Activated B cell treated with CpG ODN at 0.5 μM for 24 hours (primary cell): ENCODE measurements at regions of chr5 and their contacts with region 1.

Region 1: GRCh38 chr5:181223058-181223728 is at the start of gene TRIM41:
- DNase-seq: peak; percentile 98
- ATAC-seq: peak; percentile 67
- H3K4me3 Mint-ChIP-seq: peak within 1 kb of the TSS; percentile 95
- H3K27ac Mint-ChIP-seq: peak within 1 kb of the TSS; percentile 98
- H3K4me1 Mint-ChIP-seq: peaks cover 51% of the 10 kb centered on the region
- H3K27me3 Mint-ChIP-seq: peaks cover 6% of the 10 kb centered on the region
- CTCF ChIP-seq: no peak
- total RNA-seq, gene TRIM41: 34.9 and 39.6 TPM in 2 replicates

Region 2: GRCh38 chr5:180802325-180803180 is 420.6 kb before region 1 on chr5 and contains the start of gene MGAT1:
- CTCF ChIA-PET with region 1: no interaction called
- POLR2A ChIA-PET with region 1: interaction called, 14 read pairs
- intact Hi-C with region 1: loop called (anchors 1 kb)
- DNase-seq: peak; percentile 84
- ATAC-seq: peak; percentile 60
- H3K4me3 Mint-ChIP-seq: peak within 1 kb of the TSS; percentile 91
- H3K27ac Mint-ChIP-seq: peak within 1 kb of the TSS; percentile 91
- H3K4me1 Mint-ChIP-seq: peaks cover 84% of the 10 kb centered on the region
- H3K27me3 Mint-ChIP-seq: no peaks in the 10 kb centered on the region
- CTCF ChIP-seq: no peak
- total RNA-seq, gene MGAT1: 66.9 and 74.5 TPM in 2 replicates

Region 3: DNA sequence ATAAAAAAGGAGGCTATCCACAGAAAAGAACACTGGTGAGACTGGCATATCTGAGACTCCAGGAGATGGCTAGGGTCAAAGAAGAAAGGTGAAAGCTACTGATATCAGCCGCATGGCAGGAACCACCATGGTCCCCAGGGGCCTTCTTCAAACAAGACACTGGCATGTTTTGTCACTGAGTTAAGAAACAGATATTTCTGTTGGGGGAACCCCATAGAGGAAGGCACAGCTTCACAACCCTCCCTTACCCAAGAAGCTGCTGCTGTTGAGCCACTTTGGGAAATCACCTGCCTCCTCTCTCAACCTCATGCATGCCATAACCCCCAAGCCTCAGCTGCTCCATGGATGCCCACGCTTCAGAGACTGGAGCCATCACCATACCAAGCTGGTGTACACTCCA is 247.9 kb before region 1 on chr5:
- CTCF ChIA-PET with region 1: no interaction called
- POLR2A ChIA-PET with region 1: no interaction called
- intact Hi-C with region 1: loop called (anchors 10 kb)
- DNase-seq: peak; percentile 41
- ATAC-seq: peak; percentile 99
- H3K4me3 Mint-ChIP-seq: peak overlapping the region; percentile 47
- H3K27ac Mint-ChIP-seq: peak overlapping the region; percentile 81
- H3K4me1 Mint-ChIP-seq: peaks cover 40% of the 10 kb centered on the region
- H3K27me3 Mint-ChIP-seq: no peaks in the 10 kb centered on the region
- CTCF ChIP-seq: no peak

Region 4: GRCh38 chr5:181167814-181168488 is 55.2 kb before region 1 on chr5:
- CTCF ChIA-PET with region 1: no interaction called
- POLR2A ChIA-PET with region 1: interaction called, 7 read pairs
- intact Hi-C with region 1: loop called (anchors 2 kb)
- DNase-seq: no peak
- ATAC-seq: no peak
- H3K4me3 Mint-ChIP-seq: no peak overlapping the region
- H3K27ac Mint-ChIP-seq: no peak overlapping the region
- H3K4me1 Mint-ChIP-seq: peaks cover 48% of the 10 kb centered on the region
- H3K27me3 Mint-ChIP-seq: peaks cover 34% of the 10 kb centered on the region
- CTCF ChIP-seq: no peak

Region 5: DNA sequence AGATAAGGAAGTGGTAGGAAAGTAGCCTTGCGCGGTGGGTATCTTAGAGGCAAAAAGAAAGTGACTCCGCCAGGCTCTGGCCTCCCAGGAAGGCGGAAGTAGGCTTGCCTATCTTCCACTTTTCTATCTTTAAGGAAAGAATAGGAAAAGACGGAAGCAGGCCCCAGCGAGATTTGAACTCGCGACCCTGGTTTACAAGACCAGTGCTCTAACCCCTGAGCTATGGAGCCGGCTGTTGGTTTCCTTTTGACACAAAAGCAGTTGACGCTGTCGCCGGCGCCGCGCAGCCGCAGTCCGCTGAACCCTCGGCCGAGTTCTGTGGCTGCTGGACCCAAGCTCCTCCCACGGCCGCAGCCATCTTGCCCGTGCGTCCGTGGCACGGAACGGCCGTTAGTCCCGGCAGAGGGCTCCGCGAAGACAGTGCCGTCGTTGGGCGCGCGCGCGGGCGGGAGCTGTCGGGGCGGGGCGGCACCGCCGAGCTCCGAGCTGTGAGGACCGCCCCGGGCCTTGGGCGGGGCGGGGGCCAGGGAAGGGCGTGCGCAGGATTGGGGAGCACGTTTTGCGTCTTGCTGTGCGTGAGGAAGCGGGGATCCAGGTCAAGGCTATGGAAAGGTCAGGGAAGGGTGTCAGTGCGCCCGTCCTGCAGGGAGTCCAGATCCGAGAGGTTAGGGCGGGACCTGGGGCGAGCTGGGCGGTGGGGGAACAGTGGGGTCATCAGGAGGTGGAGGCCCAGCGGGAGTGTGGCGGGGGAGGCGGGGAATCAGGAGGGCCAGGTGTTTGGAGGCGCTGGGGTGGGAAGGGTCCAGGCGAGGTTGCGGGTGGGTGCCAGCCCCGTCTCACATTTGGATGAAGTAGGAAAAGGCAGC is 31.4 kb before region 1 on chr5:
- CTCF ChIA-PET with region 1: interaction called, 5 read pairs
- POLR2A ChIA-PET with region 1: interaction called, 137 read pairs
- intact Hi-C with region 1: loop called (anchors 1 kb)
- DNase-seq: peak; percentile 99
- ATAC-seq: peak; percentile 63
- H3K4me3 Mint-ChIP-seq: peak overlapping the region; percentile 88
- H3K27ac Mint-ChIP-seq: peak overlapping the region; percentile 96
- H3K4me1 Mint-ChIP-seq: peaks cover 34% of the 10 kb centered on the region
- H3K27me3 Mint-ChIP-seq: peaks cover 11% of the 10 kb centered on the region
- CTCF ChIP-seq: no peak

Region 6: DNA sequence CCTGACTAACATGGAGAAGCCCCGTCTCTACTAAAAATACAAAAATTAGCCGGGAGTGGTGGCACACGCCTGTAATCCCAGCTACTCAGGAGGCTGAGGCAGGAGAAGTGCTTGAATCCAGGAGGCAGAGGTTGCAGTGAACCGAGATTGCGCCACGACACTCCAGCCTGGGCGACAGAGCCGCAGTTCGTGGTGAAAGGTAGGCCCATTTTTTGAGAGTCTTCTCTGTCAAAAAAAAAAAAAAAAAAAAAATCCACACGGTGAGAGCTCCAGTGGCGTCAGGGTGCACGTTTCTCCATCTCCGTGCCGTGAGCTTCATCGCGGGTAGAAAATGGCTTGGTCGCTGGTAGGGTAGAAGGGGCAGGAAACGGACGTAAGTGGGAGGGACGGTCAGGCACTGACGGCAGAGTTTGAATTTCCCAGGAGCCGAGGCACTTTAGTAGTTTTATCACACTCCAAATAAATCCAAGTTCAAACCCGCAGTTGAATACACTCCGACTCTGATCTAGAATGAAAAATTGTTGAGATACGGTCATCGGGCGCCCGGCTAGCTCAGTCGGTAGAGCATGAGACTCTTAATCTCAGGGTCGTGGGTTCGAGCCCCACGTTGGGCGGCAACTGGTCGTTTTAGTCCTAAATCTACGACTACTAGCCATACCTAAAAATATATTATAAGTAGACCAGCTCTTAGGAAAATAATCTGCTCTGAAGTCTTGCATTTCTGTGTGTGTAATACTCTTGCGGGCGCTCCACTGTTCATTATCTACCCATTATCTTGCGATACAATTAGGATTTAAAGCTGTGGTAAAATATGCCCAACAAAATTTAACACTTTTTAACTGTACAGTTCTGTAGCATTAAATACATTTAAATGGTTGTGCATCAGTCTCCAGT is 15.7 kb before region 1 on chr5:
- CTCF ChIA-PET with region 1: interaction called, 5 read pairs
- POLR2A ChIA-PET with region 1: interaction called, 87 read pairs
- intact Hi-C with region 1: loop called (anchors 1 kb)
- DNase-seq: peak; percentile 56
- ATAC-seq: peak; percentile 62
- H3K4me3 Mint-ChIP-seq: peak overlapping the region; percentile 92
- H3K27ac Mint-ChIP-seq: peak overlapping the region; percentile 97
- H3K4me1 Mint-ChIP-seq: peaks cover 34% of the 10 kb centered on the region
- H3K27me3 Mint-ChIP-seq: peaks cover 15% of the 10 kb centered on the region
- CTCF ChIP-seq: no peak

Region 7: GRCh38 chr5:181271081-181271480 is 47.9 kb after region 1 on chr5:
- CTCF ChIA-PET with region 1: no interaction called
- POLR2A ChIA-PET with region 1: no interaction called
- intact Hi-C with region 1: no loop called
- DNase-seq: no peak
- ATAC-seq: no peak
- H3K4me3 Mint-ChIP-seq: no peak overlapping the region
- H3K27ac Mint-ChIP-seq: no peak overlapping the region
- H3K4me1 Mint-ChIP-seq: no peaks in the 10 kb centered on the region
- H3K27me3 Mint-ChIP-seq: no peaks in the 10 kb centered on the region
- CTCF ChIP-seq: no peak